Activated CD8-positive, alpha-beta T cell treated with anti-CD3 and anti-CD28 coated beads, Interleukin-2, amount 10 ng/mL, durations not matched to agents 7 days and 5 days (primary cell): ENCODE measurements at regions of chr15 and their contacts with region 1.

Region 1: GRCh38 chr15:70512772-70513362 is 250.5 kb downstream of the UACA start:
- DNase-seq: peak; percentile 79
- ATAC-seq: peak; percentile 88
- H3K4me3 Mint-ChIP-seq: no peak overlapping the region
- H3K27ac Mint-ChIP-seq: no peak overlapping the region
- H3K4me1 Mint-ChIP-seq: peaks cover 31% of the 10 kb centered on the region
- H3K27me3 Mint-ChIP-seq: peaks cover 27% of the 10 kb centered on the region

Region 2: DNA sequence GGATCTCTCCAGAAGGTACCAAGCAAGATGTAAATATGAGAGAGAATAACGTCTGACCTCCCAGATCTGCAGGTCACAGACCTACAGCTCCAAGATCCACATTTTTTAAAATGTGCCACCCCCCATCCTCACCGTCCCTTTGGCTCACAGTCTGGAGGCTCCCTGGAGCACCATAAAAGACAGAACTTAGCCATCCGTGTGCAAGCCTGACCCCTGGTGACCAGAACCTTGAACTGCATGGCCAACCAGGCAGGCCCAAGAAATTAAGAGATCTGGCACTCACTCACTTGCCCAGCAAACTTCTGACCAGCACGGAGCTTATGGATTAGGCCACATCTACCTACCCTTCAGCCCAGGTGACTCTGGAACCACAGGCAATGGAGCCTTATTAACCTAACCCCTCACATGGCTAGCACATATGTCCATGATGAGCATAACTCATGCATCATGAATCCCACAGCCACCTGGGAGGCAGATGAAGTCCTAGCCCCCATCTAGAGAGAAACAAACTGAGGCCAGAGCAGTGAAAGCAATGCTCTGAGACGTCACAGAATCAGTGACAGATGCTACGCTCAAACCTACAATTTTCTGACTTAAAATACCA is 24.8 kb before region 1 on chr15:
- CTCF ChIA-PET with region 1: interaction called, 25 read pairs
- POLR2A ChIA-PET with region 1: interaction called, 6 read pairs
- DNase-seq: peak; percentile 82
- ATAC-seq: no peak
- H3K4me3 Mint-ChIP-seq: no peak overlapping the region
- H3K27ac Mint-ChIP-seq: no peak overlapping the region
- H3K4me1 Mint-ChIP-seq: peaks cover 72% of the 10 kb centered on the region
- H3K27me3 Mint-ChIP-seq: peaks cover 37% of the 10 kb centered on the region

Region 3: GRCh38 chr15:70495991-70496599 is 16.8 kb before region 1 on chr15:
- CTCF ChIA-PET with region 1: interaction called, 25 read pairs
- POLR2A ChIA-PET with region 1: interaction called, 6 read pairs
- DNase-seq: no peak
- ATAC-seq: no peak
- H3K4me3 Mint-ChIP-seq: no peak overlapping the region
- H3K27ac Mint-ChIP-seq: no peak overlapping the region
- H3K4me1 Mint-ChIP-seq: peaks cover 67% of the 10 kb centered on the region
- H3K27me3 Mint-ChIP-seq: peaks cover 28% of the 10 kb centered on the region

Region 4: GRCh38 chr15:70528270-70528706 is 15.4 kb after region 1 on chr15:
- CTCF ChIA-PET with region 1: interaction called, 25 read pairs
- POLR2A ChIA-PET with region 1: interaction called, 4 read pairs
- DNase-seq: peak; percentile 82
- ATAC-seq: peak; percentile 99
- H3K4me3 Mint-ChIP-seq: peak overlapping the region; percentile 57
- H3K27ac Mint-ChIP-seq: peak overlapping the region; percentile 94
- H3K4me1 Mint-ChIP-seq: peaks cover 49% of the 10 kb centered on the region
- H3K27me3 Mint-ChIP-seq: no peaks in the 10 kb centered on the region

Region 5: GRCh38 chr15:70535071-70535954 is 22.4 kb after region 1 on chr15:
- CTCF ChIA-PET with region 1: interaction called, 10 read pairs
- POLR2A ChIA-PET with region 1: interaction called, 4 read pairs
- DNase-seq: peak; percentile 89
- ATAC-seq: peak; percentile 88
- H3K4me3 Mint-ChIP-seq: peak overlapping the region; percentile 80
- H3K27ac Mint-ChIP-seq: peak overlapping the region; percentile 96
- H3K4me1 Mint-ChIP-seq: peaks cover 47% of the 10 kb centered on the region
- H3K27me3 Mint-ChIP-seq: peaks cover 5% of the 10 kb centered on the region

Region 6: DNA sequence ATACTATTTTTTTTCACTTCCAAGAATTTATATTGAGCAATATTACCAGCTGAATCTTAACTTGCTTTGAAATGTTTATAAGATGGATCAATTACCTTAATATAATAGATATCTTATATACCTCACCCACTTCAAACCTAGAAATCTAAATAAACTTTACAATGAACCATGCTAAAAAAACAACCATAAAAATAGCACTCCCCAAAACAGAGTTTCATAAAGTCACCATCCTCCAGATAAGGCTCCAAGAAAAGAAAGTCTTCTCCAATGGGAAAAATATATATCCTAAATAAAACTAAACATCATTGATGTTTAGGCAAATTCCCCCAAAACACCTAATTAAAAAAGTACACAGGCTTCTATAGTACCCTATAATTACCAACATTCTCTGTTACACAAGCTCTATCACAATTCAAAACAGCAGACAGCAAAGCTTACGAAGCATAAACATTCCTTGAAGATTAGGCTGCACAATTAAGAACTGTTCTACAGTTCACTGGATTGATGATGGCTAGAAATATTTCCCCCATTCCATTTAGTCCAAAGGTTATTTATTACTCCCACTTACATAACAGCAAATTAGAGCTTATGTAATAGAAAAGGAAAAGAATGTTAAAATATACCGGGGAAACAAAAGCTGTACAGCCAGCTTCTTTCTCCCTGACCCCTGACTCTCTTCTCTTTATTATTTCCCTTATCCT is 201.0 kb after region 1 on chr15:
- CTCF ChIA-PET with region 1: no interaction called
- POLR2A ChIA-PET with region 1: no interaction called
- DNase-seq: no peak
- ATAC-seq: no peak
- H3K4me3 Mint-ChIP-seq: no peak overlapping the region
- H3K27ac Mint-ChIP-seq: no peak overlapping the region
- H3K4me1 Mint-ChIP-seq: peaks cover 5% of the 10 kb centered on the region
- H3K27me3 Mint-ChIP-seq: peaks cover 35% of the 10 kb centered on the region

Region 7: DNA sequence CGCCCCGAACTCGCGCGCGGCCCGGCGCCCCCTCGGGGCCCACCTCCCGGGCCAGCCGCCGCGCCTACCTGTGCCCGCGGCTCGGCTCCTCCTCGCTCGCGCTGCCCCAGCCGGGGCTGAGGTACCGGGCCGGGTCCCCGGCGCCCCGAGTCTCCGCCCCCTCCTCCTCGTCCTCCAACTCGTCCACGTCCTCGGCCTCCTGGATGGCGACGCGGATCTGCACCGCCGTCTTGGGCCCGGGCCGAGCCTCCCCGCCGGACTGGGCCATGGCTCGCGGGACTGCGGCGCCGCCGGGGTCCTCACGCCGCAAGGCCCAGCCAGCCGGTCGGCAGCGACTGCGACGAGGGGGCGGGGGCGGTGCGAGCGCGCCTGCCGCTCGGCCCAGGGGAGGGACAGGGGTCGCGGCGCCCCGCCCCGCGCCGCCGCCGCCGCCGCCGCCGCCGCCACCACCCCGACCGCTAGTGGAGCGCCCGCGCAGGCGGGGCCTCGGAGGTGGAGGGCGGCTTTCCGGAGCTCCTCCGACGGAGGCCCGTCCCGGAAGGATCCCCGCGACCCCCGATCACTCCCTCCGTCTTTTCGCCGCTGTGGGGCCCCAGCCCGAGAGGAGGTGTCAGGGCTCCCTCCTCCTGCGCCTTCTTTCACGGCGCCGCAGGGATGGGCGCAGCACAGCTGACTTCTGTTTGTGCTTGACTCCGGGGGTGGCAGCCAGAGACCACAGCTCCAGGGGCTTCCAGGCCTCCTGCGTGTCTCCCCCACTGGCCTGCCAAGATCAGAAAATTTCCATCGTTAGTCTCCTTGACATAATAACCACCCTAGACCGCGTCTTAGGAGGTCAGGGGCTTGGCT is 341.2 kb after region 1 on chr15 and contains the start of gene LARP6:
- CTCF ChIA-PET with region 1: no interaction called
- POLR2A ChIA-PET with region 1: no interaction called
- DNase-seq: no peak
- ATAC-seq: peak; percentile 71
- H3K4me3 Mint-ChIP-seq: peak within 1 kb of the TSS; percentile 54
- H3K27ac Mint-ChIP-seq: no peak within 1 kb of the TSS
- H3K4me1 Mint-ChIP-seq: peaks cover 9% of the 10 kb centered on the region
- H3K27me3 Mint-ChIP-seq: peaks cover 61% of the 10 kb centered on the region
- total RNA-seq, gene LARP6: not detected